Esophagus squamous epithelium (tissue), 5 donors: ENCODE measurements at regions of chr2 and their contacts with region 1.

Region 1: GRCh38 chr2:199979832-199980628 is 24.6 kb downstream of the MAIP1 start:
- DNase-seq: peak; percentile 9
- H3K4me3 ChIP-seq: peak overlapping the region in 3 of 4 donors; percentile 2 to 40 (median 14)
- H3K27ac ChIP-seq: peak overlapping the region in 3 of 4 donors; percentile 2 to 25 (median 19)
- H3K4me1 ChIP-seq: peaks cover 0 to 37% (median 11%) of the 10 kb centered on the region in 3 donors
- H3K27me3 ChIP-seq: no peaks in the 10 kb centered on the region
- CTCF ChIP-seq: peak; percentile 72 to 95 (median 90)
- POLR2A ChIP-seq: no peak

Region 2: DNA sequence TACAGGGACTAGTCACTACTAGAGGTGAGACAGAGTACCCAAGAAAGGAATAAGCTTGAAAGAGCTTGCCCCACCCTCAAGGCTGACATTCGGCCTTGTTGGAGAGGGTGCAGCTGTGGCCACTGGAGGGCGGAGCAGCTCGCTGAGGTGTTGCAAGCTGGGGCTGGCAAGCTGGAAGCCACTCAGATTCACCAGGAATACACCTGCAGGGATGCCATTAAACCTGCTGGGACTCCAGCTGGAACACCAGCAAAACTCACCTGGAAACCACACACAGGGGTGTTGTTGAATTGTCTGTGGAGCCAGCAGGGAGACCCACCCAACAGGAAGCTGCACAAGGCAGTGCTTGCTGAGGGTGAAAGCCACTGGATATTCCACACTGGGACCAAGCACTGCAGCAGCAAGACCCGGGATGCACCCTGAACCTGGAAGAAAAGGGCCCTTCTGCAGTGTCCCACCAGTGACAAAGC is 503.7 kb after region 1 on chr2:
- intact Hi-C with region 1: loop called (anchors 5 kb)
- DNase-seq: no peak
- H3K4me3 ChIP-seq: no peak overlapping the region
- H3K27ac ChIP-seq: peak overlapping the region in 2 of 4 donors; percentile 19 to 56
- H3K4me1 ChIP-seq: peaks cover 0 to 38% (median 0%) of the 10 kb centered on the region in 3 donors
- H3K27me3 ChIP-seq: no peaks in the 10 kb centered on the region
- CTCF ChIP-seq: peak in 5 of 6 experiments; percentile 37 to 77 (median 65)
- POLR2A ChIP-seq: no peak